Dorsolateral prefrontal cortex (tissue), 120 donors: ENCODE measurements at regions of chr2 and their contacts with region 1.

Region 1: DNA sequence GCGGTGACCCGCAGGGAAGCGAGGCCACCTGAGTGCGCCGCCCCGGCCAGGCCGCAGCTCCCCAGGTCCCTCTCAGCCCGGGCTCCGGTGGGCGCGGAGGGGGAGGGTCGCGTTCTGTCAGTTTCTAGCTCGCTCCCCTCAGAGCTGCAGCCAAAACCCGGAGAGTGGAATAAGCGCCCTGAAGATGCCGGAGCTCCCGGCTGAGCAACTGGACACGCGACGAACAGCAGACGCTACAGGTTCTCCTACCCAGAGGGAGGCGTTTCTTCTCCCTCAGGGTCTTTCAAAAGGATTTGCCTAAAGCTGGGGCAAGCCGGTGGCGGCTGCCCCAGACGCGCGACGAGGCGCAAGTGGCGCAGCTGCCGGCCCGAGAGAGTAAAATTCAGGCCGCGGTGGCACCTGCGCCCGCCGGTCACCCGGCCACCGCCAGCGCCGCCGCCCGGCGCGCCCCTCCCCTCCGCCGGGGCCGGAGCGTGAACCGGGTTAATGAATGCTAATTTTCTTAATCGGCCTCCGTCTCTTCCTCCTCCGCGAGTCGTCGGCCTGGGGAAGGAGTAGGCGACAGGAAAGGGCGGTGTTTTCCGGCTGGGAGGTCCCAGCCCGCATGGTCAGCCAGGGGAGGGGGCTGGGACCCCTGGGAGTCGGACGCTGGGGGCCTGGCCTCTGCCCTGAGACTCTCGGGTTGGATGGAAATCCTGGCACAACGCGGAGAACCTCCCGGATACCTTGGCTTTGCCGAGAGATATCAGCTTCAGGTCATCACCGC is 845 bp upstream of the CDC42EP3 start:
- DNase-seq: peak in 8 of 10 donors; percentile 42 to 69 (median 58)
- H3K4me3 ChIP-seq: peak overlapping the region; percentile 54 to 94 (median 81)
- H3K27ac ChIP-seq: peak overlapping the region in 58 of 59 donors; percentile 25 to 92 (median 82)
- H3K27me3 ChIP-seq: peaks cover 0 to 49% (median 0%) of the 10 kb centered on the region in 45 donors
- CTCF ChIP-seq: peak in 1 of 56 donors; percentile 8

Region 2: DNA sequence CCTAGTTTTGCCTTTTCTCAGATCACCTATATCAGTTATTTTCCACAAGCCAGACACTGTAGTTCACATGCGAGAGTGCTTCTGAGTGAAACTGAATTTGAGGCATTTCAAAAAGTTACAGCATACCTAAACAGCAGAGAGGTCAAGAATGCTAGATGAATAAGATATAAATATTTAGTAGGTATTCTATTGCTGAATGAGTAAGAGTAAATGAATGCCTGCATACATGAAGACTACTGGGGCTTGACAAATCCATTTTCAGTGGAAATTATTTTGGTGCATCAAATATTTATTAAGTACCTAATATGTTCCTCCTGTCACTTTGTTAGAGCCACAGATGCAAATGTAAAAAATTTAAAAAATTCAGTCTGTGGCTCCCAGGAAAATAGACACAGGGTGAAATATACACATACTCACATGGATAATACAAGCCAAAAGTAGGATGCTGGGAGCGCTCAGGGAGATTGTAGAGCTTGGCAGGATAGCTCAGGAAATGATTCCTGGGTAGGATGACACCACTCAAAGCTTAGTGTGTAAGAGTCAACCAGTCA is 26.7 kb after region 1 on chr2:
- intact Hi-C with region 1: no loop called
- DNase-seq: no peak
- H3K4me3 ChIP-seq: no peak overlapping the region
- H3K27ac ChIP-seq: no peak overlapping the region
- H3K27me3 ChIP-seq: peaks cover 0 to 4% (median 0%) of the 10 kb centered on the region in 45 donors
- CTCF ChIP-seq: no peak

Region 3: GRCh38 chr2:37776487-37776886 is 104.2 kb after region 1 on chr2:
- intact Hi-C with region 1: loop called in 1 of 2 experiments (anchors 10 kb)
- DNase-seq: no peak
- H3K4me3 ChIP-seq: no peak overlapping the region
- H3K27ac ChIP-seq: peak overlapping the region in 23 of 59 donors; percentile 1 to 74 (median 41)
- H3K27me3 ChIP-seq: peaks cover 0 to 3% (median 0%) of the 10 kb centered on the region in 45 donors
- CTCF ChIP-seq: no peak

Region 4: DNA sequence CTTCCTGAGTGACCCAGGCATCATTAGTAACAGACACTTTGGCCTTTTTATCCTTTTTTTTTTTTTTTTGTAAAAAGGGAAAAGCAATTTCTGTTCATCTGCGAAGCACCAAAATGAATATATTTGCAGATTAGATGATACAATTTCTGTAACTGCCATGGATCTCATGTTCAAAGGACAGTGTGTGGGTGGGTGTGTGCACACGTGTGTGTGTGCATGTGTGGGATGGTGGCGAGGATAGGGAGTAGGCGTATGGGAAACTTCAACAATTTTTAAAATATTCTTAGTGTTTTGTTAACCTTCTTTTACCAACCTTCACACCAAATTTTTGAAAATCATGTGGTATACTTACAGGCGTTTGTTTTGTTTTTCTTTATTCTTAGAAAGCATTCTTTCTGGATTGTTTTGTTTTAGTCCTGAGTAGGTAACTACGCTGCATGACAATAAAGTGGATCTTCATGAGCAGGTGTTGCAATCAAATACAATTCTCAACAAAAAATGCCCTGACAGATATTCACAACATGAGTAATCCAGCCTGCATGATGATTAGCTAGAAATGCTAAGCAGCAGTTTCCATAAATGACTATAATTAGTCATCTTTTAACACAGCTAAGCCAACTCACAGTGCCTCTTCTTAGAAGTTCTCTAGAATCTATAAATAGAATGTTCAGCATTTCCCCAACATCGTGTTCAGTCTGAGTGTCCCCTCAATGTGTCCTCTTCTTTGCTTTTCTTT is 199.3 kb after region 1 on chr2:
- intact Hi-C with region 1: loop called in 1 of 2 experiments (anchors 5 kb)
- DNase-seq: no peak
- H3K4me3 ChIP-seq: no peak overlapping the region
- H3K27ac ChIP-seq: peak overlapping the region in 34 of 59 donors; percentile 0 to 80 (median 54)
- H3K27me3 ChIP-seq: peaks cover 0 to 2% (median 0%) of the 10 kb centered on the region in 45 donors
- CTCF ChIP-seq: no peak

Region 5: DNA sequence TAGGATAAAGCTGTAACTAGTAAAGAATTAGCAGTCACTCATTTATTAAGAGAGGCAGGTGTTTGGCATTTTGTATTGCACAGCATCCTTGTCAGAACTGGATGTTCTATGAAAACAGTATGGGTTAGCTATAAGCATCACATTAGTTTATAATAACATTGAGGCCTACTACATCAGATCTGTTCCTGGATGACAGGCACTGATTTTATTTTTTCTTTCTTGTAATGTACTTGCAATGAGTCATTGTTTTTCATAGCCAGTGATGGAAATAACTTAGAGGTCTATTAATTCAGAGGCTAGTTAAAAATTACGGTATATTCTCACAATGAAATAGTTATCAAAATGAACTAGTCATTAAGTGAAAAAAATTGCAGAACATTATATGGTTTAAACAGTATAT is 239.8 kb after region 1 on chr2:
- intact Hi-C with region 1: no loop called
- DNase-seq: no peak
- H3K4me3 ChIP-seq: no peak overlapping the region
- H3K27ac ChIP-seq: no peak overlapping the region
- H3K27me3 ChIP-seq: no peaks in the 10 kb centered on the region
- CTCF ChIP-seq: no peak